Ascending aorta (tissue), 2 donors: ENCODE measurements at regions of chr4 and their contacts with region 1.

Region 1: DNA sequence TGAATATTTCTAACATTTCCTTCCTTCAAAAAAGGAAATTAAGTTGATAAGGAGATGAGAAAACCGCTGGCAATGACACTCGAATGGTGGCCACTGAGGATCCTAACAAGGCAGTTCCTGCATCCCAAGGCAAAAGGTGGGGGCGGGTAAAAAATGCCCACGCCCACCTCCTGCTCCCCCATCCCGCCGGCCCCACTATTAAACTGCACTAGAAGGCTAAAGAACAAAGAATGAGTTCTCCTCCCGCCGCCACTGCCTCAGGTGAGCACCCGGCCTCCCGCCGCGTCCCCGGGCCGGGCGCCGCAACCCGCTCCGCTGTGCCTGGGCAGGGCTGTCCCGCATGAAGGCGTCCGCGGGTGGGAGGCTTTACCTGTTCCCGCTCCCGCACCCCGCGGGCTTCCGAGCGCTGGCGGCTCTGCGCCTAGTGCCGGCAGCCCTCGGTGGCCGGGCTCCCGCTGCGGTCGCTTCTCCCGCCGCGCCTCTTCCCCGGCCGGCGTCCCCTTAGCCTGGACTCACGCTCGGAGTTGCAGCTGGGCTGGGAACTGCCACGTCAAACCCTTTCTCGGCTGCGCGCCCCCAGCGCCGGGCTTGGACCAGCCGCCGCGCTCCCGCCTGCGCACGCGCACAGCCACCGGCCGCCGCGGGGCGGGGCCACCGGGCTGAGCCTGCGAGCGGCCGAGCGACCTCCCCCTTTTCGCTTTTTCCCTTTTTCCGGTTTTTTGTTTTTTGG is at the start of gene SEC24D:
- DNase-seq: peak in 1 of 2 donors; percentile 94
- H3K4me3 ChIP-seq: peak within 1 kb of the TSS; percentile 97 to 98
- H3K27ac ChIP-seq: peak within 1 kb of the TSS; percentile 99
- H3K4me1 ChIP-seq: peaks cover 0 to 27% of the 10 kb centered on the region in 2 donors
- H3K27me3 ChIP-seq: no peaks in the 10 kb centered on the region
- CTCF ChIP-seq: peak in 1 of 3 experiments; percentile 18
- total RNA-seq, gene SEC24D: 108 TPM

Region 2: GRCh38 chr4:118772081-118772766 is 63.5 kb before region 1 on chr4:
- intact Hi-C with region 1: loop called (anchors 5 kb)
- DNase-seq: no peak
- H3K4me3 ChIP-seq: peak overlapping the region; percentile 27
- H3K27ac ChIP-seq: peak overlapping the region; percentile 62 to 76
- H3K4me1 ChIP-seq: peaks cover 7 to 46% of the 10 kb centered on the region in 2 donors
- H3K27me3 ChIP-seq: no peaks in the 10 kb centered on the region
- CTCF ChIP-seq: peak; percentile 46 to 62 (median 61)

Region 3: GRCh38 chr4:118867311-118868067 is 31.8 kb after region 1 on chr4:
- intact Hi-C with region 1: loop called (anchors 2 kb)
- DNase-seq: no peak
- H3K4me3 ChIP-seq: no peak overlapping the region
- H3K27ac ChIP-seq: no peak overlapping the region
- H3K4me1 ChIP-seq: peaks cover 0 to 3% of the 10 kb centered on the region in 2 donors
- H3K27me3 ChIP-seq: no peaks in the 10 kb centered on the region
- CTCF ChIP-seq: no peak